Heart left ventricle (tissue), 16 donors: ENCODE measurements at regions of chr12 and their contacts with region 1.

Region 1: DNA sequence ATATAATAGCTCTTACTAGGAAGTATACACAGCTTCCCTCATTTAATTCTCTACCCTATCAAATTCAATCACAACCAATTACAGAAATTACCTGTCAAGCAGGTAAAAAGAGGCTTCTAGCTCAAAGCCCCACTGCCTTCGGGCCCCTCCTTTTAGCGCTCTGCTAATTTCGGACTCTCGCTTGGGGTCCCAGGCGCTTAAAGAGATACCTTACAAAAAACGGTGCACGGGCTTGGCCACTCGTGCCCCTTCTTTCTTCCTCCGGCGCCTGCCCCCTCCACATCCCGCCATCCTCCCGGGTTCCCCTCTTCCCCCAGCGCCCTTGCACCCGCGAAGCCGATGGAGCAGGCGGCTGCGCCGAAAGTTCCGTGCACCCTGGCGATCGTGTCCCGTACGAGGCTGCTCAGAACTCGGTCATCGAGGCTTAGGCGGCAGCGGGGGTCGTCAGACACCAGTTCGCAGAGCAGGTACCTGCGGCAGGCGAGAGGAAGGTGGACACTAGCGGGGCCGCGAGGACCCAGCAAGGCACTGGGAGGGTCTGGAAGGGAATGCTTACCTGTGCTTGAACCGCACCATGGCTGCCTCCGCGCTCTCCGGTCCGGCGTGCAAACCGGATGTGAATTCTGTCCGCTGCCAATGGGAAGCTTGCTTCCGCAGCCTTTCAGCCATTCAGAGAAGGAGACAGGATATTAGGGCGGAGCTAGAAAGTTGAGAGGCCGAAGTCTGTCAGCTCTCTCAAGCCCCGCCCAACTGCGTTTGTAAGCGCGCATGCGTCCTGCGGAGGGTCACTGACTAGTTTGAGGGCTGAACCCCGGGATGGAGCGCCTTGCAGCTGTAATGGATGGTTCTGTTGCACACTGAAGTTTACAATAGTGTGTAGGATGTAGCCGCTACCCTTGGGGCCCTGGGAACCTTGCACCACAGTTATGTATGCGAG is at the start of gene POP5:
- DNase-seq: peak; percentile 96 to 97 (median 97)
- ATAC-seq: peak; percentile 92 to 97 (median 94)
- H3K4me3 ChIP-seq: peak within 1 kb of the TSS; percentile 61 to 97 (median 81)
- H3K27ac ChIP-seq: peak within 1 kb of the TSS in 11 of 12 donors; percentile 47 to 84 (median 70)
- H3K4me1 ChIP-seq: peaks cover 0 to 36% (median 26%) of the 10 kb centered on the region in 12 donors
- H3K27me3 ChIP-seq: peaks cover 0 to 9% (median 0%) of the 10 kb centered on the region in 9 donors
- CTCF ChIP-seq: no peak
- POLR2A ChIP-seq: peak in 1 of 2 donors; percentile 77
- total RNA-seq, gene POP5: 20.6 to 46.6 (median 36.3) TPM

Region 2: GRCh38 chr12:120554678-120555077 is 26.4 kb before region 1 on chr12:
- intact Hi-C with region 1: no loop called
- DNase-seq: peak in 4 of 5 donors; percentile 34 to 69 (median 42)
- ATAC-seq: peak; percentile 82 to 93 (median 89)
- H3K4me3 ChIP-seq: no peak overlapping the region
- H3K27ac ChIP-seq: peak overlapping the region; percentile 2 to 80 (median 45)
- H3K4me1 ChIP-seq: peaks cover 9 to 54% (median 42%) of the 10 kb centered on the region in 12 donors
- H3K27me3 ChIP-seq: no peaks in the 10 kb centered on the region
- CTCF ChIP-seq: no peak
- POLR2A ChIP-seq: no peak

Region 3: DNA sequence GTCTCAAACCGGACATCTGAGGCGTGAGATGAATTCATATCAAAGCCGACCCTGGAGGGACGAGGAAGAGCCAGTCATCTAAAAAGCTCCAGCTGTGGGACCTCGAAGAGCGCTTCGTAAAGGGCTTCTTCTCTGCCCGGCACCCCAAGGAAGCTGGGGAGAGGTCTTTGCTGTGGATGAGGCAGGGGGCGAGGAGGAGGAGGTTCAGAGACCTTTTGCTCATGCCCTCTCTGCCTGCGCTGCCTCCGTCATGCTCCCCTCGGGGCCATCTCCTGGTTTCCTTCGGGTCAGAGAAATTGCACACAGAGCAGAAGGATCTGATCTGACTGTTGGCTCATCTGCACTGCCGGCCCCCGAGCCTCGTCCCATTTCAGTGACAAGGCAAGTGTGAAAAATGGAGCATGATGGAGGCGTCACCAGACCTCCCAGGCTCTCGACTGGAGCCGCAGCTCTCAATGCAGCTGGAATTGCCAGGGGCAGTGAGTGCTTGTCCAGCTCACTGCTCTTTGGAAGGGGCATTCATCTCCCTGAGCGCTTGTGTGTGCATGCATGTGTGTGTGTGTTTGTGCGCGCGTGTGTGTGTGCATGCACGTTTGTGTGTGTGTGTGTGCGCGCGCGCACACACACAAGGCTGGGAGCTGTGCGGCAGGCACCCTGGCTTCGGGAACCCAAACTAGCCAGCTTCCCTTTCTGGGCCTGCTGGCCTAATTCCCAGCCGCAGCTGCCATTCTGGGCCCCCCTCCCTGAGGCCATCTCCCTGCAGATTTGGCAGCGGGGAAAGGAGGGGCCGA is 68.6 kb after region 1 on chr12:
- intact Hi-C with region 1: loop called (anchors 1 to 5 kb)
- DNase-seq: peak in 3 of 5 donors; percentile 23 to 74 (median 61)
- ATAC-seq: peak in 2 of 4 donors; percentile 0 to 3
- H3K4me3 ChIP-seq: peak overlapping the region in 11 of 12 donors; percentile 32 to 61 (median 47)
- H3K27ac ChIP-seq: peak overlapping the region; percentile 31 to 85 (median 68)
- H3K4me1 ChIP-seq: peaks cover 0 to 62% (median 35%) of the 10 kb centered on the region in 12 donors
- H3K27me3 ChIP-seq: peaks cover 0 to 17% (median 4%) of the 10 kb centered on the region in 9 donors
- CTCF ChIP-seq: peak in 2 of 12 donors; percentile 9 to 25
- POLR2A ChIP-seq: no peak

Region 4: GRCh38 chr12:120904197-120904773 is 323.2 kb after region 1 on chr12 and contains the start of gene SPPL3:
- intact Hi-C with region 1: loop called in 1 of 10 experiments (anchors 10 kb)
- DNase-seq: peak; percentile 93 to 97 (median 96)
- ATAC-seq: peak; percentile 82 to 96 (median 94)
- H3K4me3 ChIP-seq: peak within 1 kb of the TSS; percentile 78 to 99 (median 92)
- H3K27ac ChIP-seq: peak within 1 kb of the TSS; percentile 77 to 95 (median 90)
- H3K4me1 ChIP-seq: peaks cover 0 to 37% (median 17%) of the 10 kb centered on the region in 12 donors
- H3K27me3 ChIP-seq: no peaks in the 10 kb centered on the region
- CTCF ChIP-seq: peak in 3 of 12 donors; percentile 12 to 21 (median 15)
- POLR2A ChIP-seq: peak in 1 of 2 donors; percentile 76
- total RNA-seq, gene SPPL3: 16.1 to 48.2 (median 27.0) TPM

Region 5: DNA sequence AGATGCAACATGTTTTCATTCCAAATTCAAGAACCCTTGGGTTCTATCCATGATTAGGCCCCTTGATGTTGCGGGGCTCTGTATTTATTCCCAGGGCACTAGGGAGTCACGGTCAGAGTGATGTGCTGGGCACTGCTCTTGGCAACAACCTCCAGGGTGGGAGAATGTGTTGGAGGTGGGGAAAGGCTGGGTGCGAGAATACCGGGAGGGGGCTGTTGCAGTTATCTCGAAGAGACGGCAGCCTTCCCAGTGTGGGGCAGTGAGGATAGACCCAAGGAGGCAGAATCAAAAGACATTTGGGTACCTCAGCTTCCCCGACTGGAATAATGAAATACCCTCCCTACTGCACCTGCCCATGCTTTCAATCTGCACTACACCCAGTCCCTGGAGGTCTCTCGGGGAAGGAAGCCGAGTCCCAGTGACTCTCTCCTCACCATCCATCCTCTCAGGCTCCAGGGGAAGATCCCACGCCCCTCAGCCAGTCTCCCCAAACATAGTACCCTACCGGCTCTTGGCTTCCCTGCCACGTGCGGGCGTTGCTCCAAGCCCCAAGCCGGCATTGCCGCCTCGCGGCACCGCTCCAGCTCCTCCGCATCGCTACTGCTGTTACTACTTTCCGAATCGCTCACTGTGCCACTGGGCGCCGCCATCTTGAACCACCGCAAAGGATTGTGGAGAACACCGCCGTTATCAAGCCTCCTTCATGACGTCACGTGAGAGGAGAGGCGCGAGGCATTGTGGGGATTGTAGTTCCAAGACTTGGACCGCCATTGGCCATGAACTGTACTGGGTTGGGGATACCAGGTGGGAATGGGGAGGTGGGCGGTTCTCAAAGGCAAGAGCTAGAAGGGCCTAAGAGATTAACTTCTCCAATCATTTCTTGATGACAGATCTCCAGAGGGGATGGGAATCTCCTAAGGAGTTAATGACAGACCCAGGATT is 435.0 kb after region 1 on chr12 and contains the start of gene C12orf43:
- intact Hi-C with region 1: loop called in 1 of 10 experiments (anchors 10 kb)
- DNase-seq: peak; percentile 90 to 93 (median 91)
- ATAC-seq: peak; percentile 97 to 100 (median 99)
- H3K4me3 ChIP-seq: peak within 1 kb of the TSS; percentile 45 to 96 (median 84)
- H3K27ac ChIP-seq: peak within 1 kb of the TSS in 10 of 12 donors; percentile 2 to 82 (median 72)
- H3K4me1 ChIP-seq: peaks cover 0 to 11% (median 8%) of the 10 kb centered on the region in 12 donors
- H3K27me3 ChIP-seq: no peaks in the 10 kb centered on the region
- CTCF ChIP-seq: no peak
- POLR2A ChIP-seq: peak in 1 of 2 donors; percentile 42
- total RNA-seq, gene C12orf43: 7.2 to 16.0 (median 9.2) TPM

Region 6: GRCh38 chr12:121110211-121110940 is 529.3 kb after region 1 on chr12:
- intact Hi-C with region 1: loop called in 2 of 10 experiments (anchors 5 to 10 kb)
- DNase-seq: peak in 4 of 5 donors; percentile 43 to 62 (median 55)
- ATAC-seq: peak; percentile 58 to 80 (median 78)
- H3K4me3 ChIP-seq: no peak overlapping the region
- H3K27ac ChIP-seq: no peak overlapping the region
- H3K4me1 ChIP-seq: no peaks in the 10 kb centered on the region
- H3K27me3 ChIP-seq: no peaks in the 10 kb centered on the region
- CTCF ChIP-seq: peak; percentile 87 to 98 (median 92)
- POLR2A ChIP-seq: no peak